ENCODE measurements at regions of chr3 and their contacts with region 1.

Region 1: DNA sequence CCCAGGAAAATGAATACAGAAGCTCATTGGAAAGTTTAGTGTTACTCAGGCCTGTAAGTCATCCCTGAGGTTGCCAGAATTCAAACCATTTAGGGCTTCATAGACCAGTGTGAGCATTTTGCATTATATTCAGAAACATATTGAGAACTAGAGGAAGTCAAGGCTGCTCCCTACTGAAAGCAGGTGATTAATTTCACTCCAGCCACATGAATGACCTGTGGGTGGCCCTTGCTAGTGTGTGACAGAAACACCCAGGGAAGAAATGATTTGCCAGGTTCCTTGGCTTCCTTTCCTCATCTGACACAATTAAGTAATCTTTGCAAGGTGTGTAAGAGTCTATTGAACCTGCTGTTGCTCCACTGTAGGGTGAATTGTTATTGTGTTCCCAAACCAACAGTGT is 61.8 kb downstream of the GAP43 start:
- DNase-seq: no peak
- ATAC-seq: no peak
- H3K4me3 ChIP-seq: no peak overlapping the region
- H3K27ac ChIP-seq: no peak overlapping the region
- H3K4me1 ChIP-seq: peaks cover 0 to 2% of the 10 kb centered on the region in 2 donors
- H3K27me3 ChIP-seq: no peaks in the 10 kb centered on the region

Region 2: GRCh38 chr3:115533218-115533617 is 151.9 kb before region 1 on chr3:
- intact Hi-C with region 1: no loop called
- DNase-seq: peak in 1 of 2 donors; percentile 63
- ATAC-seq: no peak
- H3K4me3 ChIP-seq: no peak overlapping the region
- H3K27ac ChIP-seq: no peak overlapping the region
- H3K4me1 ChIP-seq: no peaks in the 10 kb centered on the region
- H3K27me3 ChIP-seq: no peaks in the 10 kb centered on the region

Region 3: DNA sequence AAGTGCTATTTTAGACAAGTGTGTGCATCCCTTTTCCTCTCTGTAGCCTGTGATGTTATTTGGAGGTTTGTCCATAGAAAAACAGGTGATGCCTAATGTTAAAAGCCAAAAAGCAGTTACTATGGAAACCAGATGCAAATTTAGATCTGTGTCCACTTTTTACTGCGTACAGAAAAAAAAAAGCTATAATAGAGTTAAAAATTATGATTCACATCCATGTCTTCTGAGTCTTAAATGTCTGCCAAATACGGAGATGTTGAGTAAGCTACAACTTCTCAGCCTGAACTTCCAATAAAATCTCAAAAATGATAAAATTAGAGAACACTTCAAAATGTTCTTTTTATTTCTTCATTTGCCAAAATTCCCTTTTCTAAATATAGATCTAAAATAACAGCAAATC is 136.0 kb before region 1 on chr3:
- intact Hi-C with region 1: loop called in 1 of 2 experiments (anchors 10 kb)
- DNase-seq: no peak
- ATAC-seq: no peak
- H3K4me3 ChIP-seq: no peak overlapping the region
- H3K27ac ChIP-seq: no peak overlapping the region
- H3K4me1 ChIP-seq: no peaks in the 10 kb centered on the region
- H3K27me3 ChIP-seq: no peaks in the 10 kb centered on the region

Region 4: GRCh38 chr3:115720983-115721382 is 35.9 kb after region 1 on chr3:
- intact Hi-C with region 1: no loop called
- DNase-seq: no peak
- ATAC-seq: no peak
- H3K4me3 ChIP-seq: no peak overlapping the region
- H3K27ac ChIP-seq: no peak overlapping the region
- H3K4me1 ChIP-seq: no peaks in the 10 kb centered on the region
- H3K27me3 ChIP-seq: no peaks in the 10 kb centered on the region

Region 5: GRCh38 chr3:115741650-115742049 is 56.6 kb after region 1 on chr3:
- intact Hi-C with region 1: no loop called
- DNase-seq: no peak
- ATAC-seq: no peak
- H3K4me3 ChIP-seq: no peak overlapping the region
- H3K27ac ChIP-seq: no peak overlapping the region
- H3K4me1 ChIP-seq: no peaks in the 10 kb centered on the region
- H3K27me3 ChIP-seq: no peaks in the 10 kb centered on the region

Measured in aorta (tissue), 5 donors.